Activated naive CD4-positive, alpha-beta T cell treated with anti-CD3 and anti-CD28 coated beads for 36 hours (primary cell): ENCODE measurements at regions of chr12 and their contacts with region 1.

Region 1: DNA sequence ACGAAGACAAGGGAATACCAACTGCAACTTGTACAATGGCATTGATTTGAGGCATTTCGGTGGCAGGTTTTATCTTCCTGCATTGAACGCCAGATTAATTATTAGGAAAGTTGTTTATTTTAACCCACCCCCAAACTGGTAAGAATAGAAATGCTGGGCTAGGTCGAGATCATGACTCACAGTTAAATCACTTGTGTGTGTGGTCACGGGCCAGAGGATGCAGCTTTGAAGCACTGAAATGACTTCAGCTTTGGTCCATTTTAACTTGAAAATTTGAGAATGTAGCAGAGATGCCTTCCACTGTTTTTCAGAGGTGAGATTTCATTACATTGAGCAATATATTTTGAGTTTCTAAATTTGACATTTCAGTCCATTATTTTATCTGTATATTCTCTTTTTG is 23.6 kb upstream of the KCNH3 start:
- DNase-seq: no peak
- H3K4me3 Mint-ChIP-seq: no peak overlapping the region
- H3K27ac Mint-ChIP-seq: no peak overlapping the region
- H3K4me1 Mint-ChIP-seq: peaks cover 9% of the 10 kb centered on the region
- H3K27me3 Mint-ChIP-seq: no peaks in the 10 kb centered on the region

Region 2: GRCh38 chr12:49109641-49110463 is 405.4 kb before region 1 on chr12:
- CTCF ChIA-PET with region 1: no interaction called
- intact Hi-C with region 1: no loop called
- DNase-seq: peak; percentile 36
- H3K4me3 Mint-ChIP-seq: peak overlapping the region; percentile 93
- H3K27ac Mint-ChIP-seq: peak overlapping the region; percentile 94
- H3K4me1 Mint-ChIP-seq: peaks cover 37% of the 10 kb centered on the region
- H3K27me3 Mint-ChIP-seq: no peaks in the 10 kb centered on the region

Region 3: DNA sequence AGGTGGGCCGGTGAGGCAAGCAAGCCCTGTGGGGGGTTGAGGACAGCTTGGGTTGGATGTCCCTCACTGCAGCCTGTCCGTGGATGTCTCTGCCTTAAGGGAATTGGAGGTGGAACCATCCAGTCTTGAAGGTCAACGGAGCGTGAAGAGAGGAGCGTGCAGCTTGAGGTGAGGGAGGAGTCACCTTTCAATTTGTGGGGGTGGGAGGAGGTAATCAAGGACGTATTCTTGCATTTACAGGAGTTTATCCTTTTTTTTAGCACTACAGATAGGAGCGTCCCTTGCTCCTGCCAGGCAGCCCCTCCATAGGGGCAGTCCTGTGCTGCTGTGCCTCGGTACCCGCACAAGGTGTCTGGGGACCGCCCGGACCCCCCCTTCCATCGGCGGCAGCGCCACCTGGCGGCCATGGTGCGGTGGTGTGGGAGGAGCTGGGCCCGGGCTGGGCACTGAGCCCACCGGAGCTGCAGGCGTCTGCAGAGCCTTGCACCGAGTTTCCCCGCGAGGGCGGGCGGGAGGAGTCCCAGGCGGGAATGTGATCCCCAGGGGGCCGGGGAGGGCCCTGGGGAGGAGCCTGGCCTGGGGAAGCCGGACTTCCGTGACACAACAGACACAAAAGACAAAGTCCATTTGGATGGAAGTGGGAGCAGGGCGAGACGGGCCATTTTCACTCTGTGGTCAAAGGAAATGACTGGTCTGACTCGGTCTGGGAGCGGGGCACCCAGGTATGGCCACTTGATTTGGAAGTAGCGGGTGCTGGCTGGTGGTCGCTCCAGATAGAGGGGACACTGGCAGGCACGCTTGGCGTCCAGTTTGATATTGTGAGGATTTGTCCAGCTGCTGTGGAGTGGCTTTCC is 167.7 kb before region 1 on chr12:
- CTCF ChIA-PET with region 1: interaction called, 13 read pairs
- intact Hi-C with region 1: no loop called
- DNase-seq: peak; percentile 77
- H3K4me3 Mint-ChIP-seq: peak overlapping the region; percentile 58
- H3K27ac Mint-ChIP-seq: no peak overlapping the region
- H3K4me1 Mint-ChIP-seq: peaks cover 41% of the 10 kb centered on the region
- H3K27me3 Mint-ChIP-seq: peaks cover 58% of the 10 kb centered on the region

Region 4: DNA sequence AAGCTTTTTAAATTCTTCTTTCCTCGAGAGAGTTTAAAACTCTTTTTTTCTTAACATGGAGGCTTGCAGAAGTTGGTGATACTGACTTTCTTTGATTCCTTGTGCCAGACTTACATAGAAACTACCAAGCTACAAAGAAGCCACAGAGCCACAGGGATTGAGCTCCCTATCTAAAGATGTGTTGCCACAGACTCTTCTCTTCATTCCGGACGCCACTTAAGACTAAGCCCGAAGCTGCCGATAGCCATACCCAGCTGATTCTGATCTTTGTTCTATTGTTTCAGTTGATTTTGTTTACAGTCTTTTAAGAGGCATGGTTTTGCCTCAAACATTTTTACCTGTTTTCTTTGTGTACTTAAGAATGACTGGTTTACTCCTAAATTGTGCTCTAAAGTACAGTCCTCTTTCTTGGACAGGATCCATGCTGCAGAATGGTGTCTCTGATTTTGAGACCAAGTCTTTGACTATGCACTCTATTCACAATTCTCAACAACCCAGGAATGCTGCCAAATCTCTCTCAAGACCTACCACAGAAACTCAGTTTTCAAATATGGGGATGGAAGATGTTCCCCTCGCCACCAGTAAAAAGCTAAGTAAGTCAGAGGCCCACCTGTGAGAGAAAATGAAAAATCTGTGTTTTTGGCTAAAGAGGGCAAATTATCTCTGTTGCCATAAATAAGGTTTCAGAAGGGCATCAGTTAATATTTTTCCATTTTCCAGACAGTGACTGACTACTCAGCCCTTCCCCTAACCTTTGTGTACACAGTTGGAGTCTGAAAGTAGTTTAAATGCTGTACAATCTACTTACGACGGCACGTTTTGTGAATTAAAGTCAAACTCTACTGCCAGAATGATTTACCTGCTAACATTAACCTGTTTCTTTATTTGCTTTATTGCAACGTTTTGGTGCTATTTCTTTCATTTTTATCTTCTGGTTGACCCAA is 18.6 kb before region 1 on chr12:
- CTCF ChIA-PET with region 1: interaction called, 19 read pairs
- intact Hi-C with region 1: no loop called
- DNase-seq: no peak
- H3K4me3 Mint-ChIP-seq: no peak overlapping the region
- H3K27ac Mint-ChIP-seq: no peak overlapping the region
- H3K4me1 Mint-ChIP-seq: peaks cover 6% of the 10 kb centered on the region
- H3K27me3 Mint-ChIP-seq: no peaks in the 10 kb centered on the region